Posterior vena cava (tissue), 2 donors: ENCODE measurements at regions of chr6 and their contacts with region 1.

Region 1: GRCh38 chr6:168355716-168356449 is 36.3 kb upstream of the DACT2 start:
- DNase-seq: no peak

Region 2: GRCh38 chr6:167839755-167840154 is 516.1 kb before region 1 on chr6:
- intact Hi-C with region 1: no loop called
- DNase-seq: no peak

Region 3: GRCh38 chr6:168247443-168248147 is 108.3 kb before region 1 on chr6:
- intact Hi-C with region 1: no loop called
- DNase-seq: no peak

Region 4: GRCh38 chr6:170030821-170031471 is 1675.1 kb after region 1 on chr6:
- intact Hi-C with region 1: loop called in 1 of 2 experiments (anchors 10 kb)
- DNase-seq: peak; percentile 60